HEK293 (cell line): ENCODE measurements at regions of chr2 and their contacts with region 1.

Region 1: GRCh38 chr2:209993968-209994367 is 8.5 kb upstream of the RPE start:
- H3K4me3 ChIP-seq: no peak overlapping the region
- H3K27ac ChIP-seq: no peak overlapping the region
- H3K4me1 ChIP-seq: no peaks in the 10 kb centered on the region
- CTCF ChIP-seq: no peak

Region 2: DNA sequence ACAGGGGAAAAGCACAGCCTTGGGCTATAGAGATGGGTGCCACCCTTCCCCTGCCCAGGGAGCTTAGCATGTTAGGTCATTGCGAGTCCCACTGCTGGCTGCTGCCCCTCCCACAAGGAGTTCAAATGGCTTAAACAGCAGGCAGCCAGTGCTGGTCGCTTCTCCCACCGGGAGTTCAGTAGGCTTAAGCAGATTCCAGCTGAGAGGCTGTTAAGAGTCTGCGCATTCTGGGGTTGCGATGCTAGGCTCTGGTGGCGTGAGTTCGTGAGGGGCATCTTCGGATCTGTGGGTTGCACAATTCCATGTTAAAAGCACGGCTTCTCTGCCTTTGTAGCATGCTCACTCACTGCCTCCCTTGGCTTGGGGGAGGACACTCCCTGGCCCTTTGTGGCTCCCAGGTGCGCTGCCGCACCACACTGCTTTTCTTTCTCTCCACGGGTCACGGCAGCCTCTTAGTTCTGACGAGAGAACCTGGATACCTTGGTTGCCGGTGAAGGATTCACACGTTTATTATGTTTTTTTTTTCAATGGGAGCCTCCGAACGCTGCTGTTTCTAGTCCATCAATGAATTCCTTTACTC is 129.2 kb before region 1 on chr2:
- CTCF ChIA-PET with region 1: no interaction called
- POLR2A ChIA-PET with region 1: no interaction called
- H3K4me3 ChIP-seq: no peak overlapping the region
- H3K27ac ChIP-seq: no peak overlapping the region
- H3K4me1 ChIP-seq: no peaks in the 10 kb centered on the region
- CTCF ChIP-seq: no peak

Region 3: GRCh38 chr2:210162466-210163124 is 168.6 kb after region 1 on chr2:
- CTCF ChIA-PET with region 1: no interaction called
- POLR2A ChIA-PET with region 1: no interaction called
- H3K4me3 ChIP-seq: no peak overlapping the region
- H3K27ac ChIP-seq: no peak overlapping the region
- H3K4me1 ChIP-seq: peaks cover 13% of the 10 kb centered on the region; the same call in 1 of the 2 replicates
- CTCF ChIP-seq: no peak

Region 4: GRCh38 chr2:210195101-210195852 is 201.3 kb after region 1 on chr2:
- CTCF ChIA-PET with region 1: interaction called, 16 read pairs
- POLR2A ChIA-PET with region 1: no interaction called
- H3K4me3 ChIP-seq: no peak overlapping the region
- H3K27ac ChIP-seq: no peak overlapping the region
- H3K4me1 ChIP-seq: no peaks in the 10 kb centered on the region
- CTCF ChIP-seq: no peak